ENCODE measurements at regions of chr1 and their contacts with region 1.

Region 1: GRCh38 chr1:232096751-232097150 is 470.2 kb downstream of the DISC1 start:
- DNase-seq: no peak
- H3K4me3 ChIP-seq: no peak overlapping the region
- CTCF ChIP-seq: no peak
- POLR2A ChIP-seq: no peak

Region 2: GRCh38 chr1:234093741-234094140 is 1997.0 kb after region 1 on chr1:
- intact Hi-C with region 1: loop called (anchors 5 kb)
- DNase-seq: peak in 1 of 2 donors; percentile 21
- H3K4me3 ChIP-seq: no peak overlapping the region
- CTCF ChIP-seq: no peak
- POLR2A ChIP-seq: no peak